Gastrocnemius medialis (tissue), 4 donors: ENCODE measurements at regions of chr16 and their contacts with region 1.

Region 1: DNA sequence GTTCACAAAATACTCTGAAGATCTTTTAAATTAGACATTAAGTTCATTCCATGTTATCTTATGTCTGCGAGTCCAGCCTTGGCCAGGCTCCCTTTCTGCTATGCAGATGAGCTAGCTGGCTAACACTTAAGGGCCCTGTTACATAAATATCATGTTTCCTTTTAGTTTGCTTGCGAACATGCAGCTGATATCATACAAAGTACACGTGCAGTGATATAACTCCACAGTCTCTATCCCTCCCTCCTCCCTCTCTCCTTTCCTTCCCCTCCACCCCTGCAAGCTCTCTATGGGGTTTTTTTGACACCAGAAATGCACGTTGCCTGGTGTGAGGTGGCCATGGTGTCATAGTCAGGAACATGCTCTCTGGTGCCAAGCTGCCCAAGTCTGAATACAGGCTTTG is 46.1 kb downstream of the ARHGAP17 start:
- DNase-seq: no peak
- ATAC-seq: peak in 1 of 2 donors; percentile 67
- H3K4me3 ChIP-seq: no peak overlapping the region
- H3K27ac ChIP-seq: peak overlapping the region in 2 of 4 donors; percentile 26 to 43
- H3K4me1 ChIP-seq: peaks cover 12 to 24% of the 10 kb centered on the region in 2 donors
- H3K27me3 ChIP-seq: no peaks in the 10 kb centered on the region
- CTCF ChIP-seq: no peak
- POLR2A ChIP-seq: no peak

Region 2: GRCh38 chr16:23539984-23540816 is 1428.9 kb before region 1 on chr16:
- in situ Hi-C with region 1: no loop called
- intact Hi-C with region 1: no loop called
- DNase-seq: no peak
- ATAC-seq: no peak
- H3K4me3 ChIP-seq: no peak overlapping the region
- H3K27ac ChIP-seq: no peak overlapping the region
- H3K4me1 ChIP-seq: no peaks in the 10 kb centered on the region
- H3K27me3 ChIP-seq: no peaks in the 10 kb centered on the region
- CTCF ChIP-seq: no peak
- POLR2A ChIP-seq: no peak

Region 3: GRCh38 chr16:24552705-24553246 is 416.3 kb before region 1 on chr16:
- in situ Hi-C with region 1: loop called in 1 of 4 experiments (anchors 25 kb)
- intact Hi-C with region 1: loop called (anchors 10 kb)
- DNase-seq: no peak
- ATAC-seq: no peak
- H3K4me3 ChIP-seq: no peak overlapping the region
- H3K27ac ChIP-seq: no peak overlapping the region
- H3K4me1 ChIP-seq: no peaks in the 10 kb centered on the region
- H3K27me3 ChIP-seq: no peaks in the 10 kb centered on the region
- CTCF ChIP-seq: no peak
- POLR2A ChIP-seq: no peak

Region 4: DNA sequence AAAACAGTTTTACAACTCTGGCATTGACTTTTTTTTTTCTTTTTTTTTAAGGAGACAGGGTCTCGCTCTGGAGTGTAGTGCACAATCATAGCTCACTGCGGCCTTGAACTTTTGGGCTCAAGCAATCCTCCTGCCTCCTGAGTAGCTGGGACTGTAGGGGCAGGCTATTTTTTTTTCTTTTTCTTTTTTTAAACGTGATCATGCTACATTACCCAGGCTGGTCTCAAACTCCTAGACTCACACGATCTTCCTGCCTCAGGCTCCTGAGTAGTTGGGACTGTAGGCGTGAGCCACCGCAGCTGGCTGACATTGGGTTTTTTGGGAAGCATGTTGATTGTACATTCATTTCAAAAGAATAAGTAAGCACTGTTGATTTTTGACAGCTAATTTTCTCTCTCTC is 207.5 kb before region 1 on chr16:
- in situ Hi-C with region 1: no loop called
- intact Hi-C with region 1: no loop called
- DNase-seq: no peak
- ATAC-seq: no peak
- H3K4me3 ChIP-seq: no peak overlapping the region
- H3K27ac ChIP-seq: peak overlapping the region; percentile 57 to 90 (median 66)
- H3K4me1 ChIP-seq: peaks cover 29 to 51% of the 10 kb centered on the region in 2 donors
- H3K27me3 ChIP-seq: no peaks in the 10 kb centered on the region
- CTCF ChIP-seq: no peak
- POLR2A ChIP-seq: no peak

Region 5: GRCh38 chr16:25051406-25052150 is 82.5 kb after region 1 on chr16:
- in situ Hi-C with region 1: no loop called
- intact Hi-C with region 1: no loop called
- DNase-seq: no peak
- ATAC-seq: peak; percentile 13 to 28
- H3K4me3 ChIP-seq: peak overlapping the region; percentile 2 to 37 (median 32)
- H3K27ac ChIP-seq: peak overlapping the region; percentile 63 to 93 (median 78)
- H3K4me1 ChIP-seq: peaks cover 25 to 27% of the 10 kb centered on the region in 2 donors
- H3K27me3 ChIP-seq: no peaks in the 10 kb centered on the region
- CTCF ChIP-seq: no peak
- POLR2A ChIP-seq: no peak